ENCODE measurements at regions of chr18 and their contacts with region 1.

Region 1: DNA sequence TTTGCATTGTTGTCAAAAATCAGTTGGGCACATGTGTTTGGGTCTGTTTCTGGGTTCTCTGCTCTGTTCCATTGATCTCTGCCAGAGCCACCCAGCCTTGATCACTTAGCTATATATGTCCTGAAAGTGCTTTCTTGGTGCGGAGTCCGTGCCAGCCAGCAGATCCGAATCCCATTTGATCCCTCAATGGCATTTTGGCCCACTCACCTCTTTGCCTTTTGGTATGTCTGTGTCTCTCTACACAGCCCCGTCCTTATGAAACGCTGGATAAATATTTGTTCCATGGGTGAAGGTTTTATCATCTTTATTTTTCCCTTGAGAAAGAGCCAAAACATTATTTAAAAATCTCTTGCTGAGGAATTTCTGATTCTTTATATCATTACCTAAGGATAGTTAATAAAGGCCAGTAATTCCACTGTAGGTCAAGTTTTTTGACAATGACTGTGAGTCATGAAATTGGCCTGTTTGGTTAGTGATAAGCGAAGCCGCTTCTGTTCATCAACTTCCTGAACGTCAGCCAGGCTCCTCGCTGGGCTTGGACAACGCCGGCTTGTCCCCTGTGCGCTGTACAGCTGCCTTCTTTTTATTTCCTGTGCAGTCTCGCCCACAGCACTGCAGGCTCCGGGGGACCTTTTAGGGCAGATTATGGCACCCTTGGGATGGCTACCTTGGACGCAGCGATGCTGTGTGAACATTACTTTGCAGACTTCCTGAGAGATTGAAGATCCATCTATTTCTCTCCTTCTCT is 24.9 kb downstream of the MTCL1 start:
- DNase-seq: peak; percentile 74 to 77
- H3K4me3 ChIP-seq: no peak overlapping the region
- H3K4me3 Mint-ChIP-seq: peak overlapping the region; percentile 39
- H3K27ac Mint-ChIP-seq: peak overlapping the region; percentile 67
- H3K4me1 ChIP-seq: peaks cover 30% of the 10 kb centered on the region
- H3K4me1 Mint-ChIP-seq: peaks cover 15% of the 10 kb centered on the region
- H3K27me3 ChIP-seq: no peaks in the 10 kb centered on the region
- H3K27me3 Mint-ChIP-seq: no peaks in the 10 kb centered on the region
- CTCF ChIP-seq: no peak

Region 2: GRCh38 chr18:8450013-8450412 is 280.2 kb before region 1 on chr18:
- CTCF ChIA-PET with region 1: no interaction called
- POLR2A ChIA-PET with region 1: no interaction called
- intact Hi-C with region 1: no loop called
- DNase-seq: peak in 1 of 2 experiments; percentile 34
- H3K4me3 ChIP-seq: no peak overlapping the region
- H3K4me3 Mint-ChIP-seq: no peak overlapping the region
- H3K27ac Mint-ChIP-seq: no peak overlapping the region
- H3K4me1 ChIP-seq: no peaks in the 10 kb centered on the region
- H3K4me1 Mint-ChIP-seq: peaks cover 6% of the 10 kb centered on the region
- H3K27me3 ChIP-seq: no peaks in the 10 kb centered on the region
- H3K27me3 Mint-ChIP-seq: no peaks in the 10 kb centered on the region
- CTCF ChIP-seq: peak; percentile 54 to 55

Region 3: GRCh38 chr18:8786478-8787370 is 56.5 kb after region 1 on chr18:
- CTCF ChIA-PET with region 1: no interaction called
- POLR2A ChIA-PET with region 1: no interaction called
- intact Hi-C with region 1: loop called (anchors 5 kb)
- DNase-seq: peak; percentile 60 to 82
- H3K4me3 ChIP-seq: no peak overlapping the region
- H3K4me3 Mint-ChIP-seq: no peak overlapping the region
- H3K27ac Mint-ChIP-seq: peak overlapping the region; percentile 93
- H3K4me1 ChIP-seq: peaks cover 17% of the 10 kb centered on the region
- H3K4me1 Mint-ChIP-seq: peaks cover 14% of the 10 kb centered on the region
- H3K27me3 ChIP-seq: no peaks in the 10 kb centered on the region; the same call in 1 of the 2 replicates
- H3K27me3 Mint-ChIP-seq: no peaks in the 10 kb centered on the region
- CTCF ChIP-seq: no peak

Measured in Caco-2 (cell line).